PC-9 (cell line): ENCODE measurements at regions of chr12 and their contacts with region 1.

Region 1: GRCh38 chr12:113299619-113300237 is 35.2 kb downstream of the SLC8B1 start:
- DNase-seq: peak; percentile 87 to 96
- H3K4me3 ChIP-seq: no peak overlapping the region
- H3K27ac ChIP-seq: peak overlapping the region; percentile 62
- H3K4me1 ChIP-seq: peaks cover 19% of the 10 kb centered on the region
- H3K27me3 ChIP-seq: no peaks in the 10 kb centered on the region
- CTCF ChIP-seq: no peak

Region 2: GRCh38 chr12:112546996-112547395 is 752.7 kb before region 1 on chr12:
- CTCF ChIA-PET with region 1: no interaction called
- POLR2A ChIA-PET with region 1: no interaction called
- intact Hi-C with region 1: no loop called
- DNase-seq: no peak
- H3K4me3 ChIP-seq: no peak overlapping the region
- H3K27ac ChIP-seq: no peak overlapping the region
- H3K4me1 ChIP-seq: no peaks in the 10 kb centered on the region
- H3K27me3 ChIP-seq: peaks cover 59% of the 10 kb centered on the region
- CTCF ChIP-seq: no peak

Region 3: GRCh38 chr12:112762753-112763152 is 537.0 kb before region 1 on chr12:
- CTCF ChIA-PET with region 1: no interaction called
- POLR2A ChIA-PET with region 1: no interaction called
- intact Hi-C with region 1: no loop called
- DNase-seq: no peak
- H3K4me3 ChIP-seq: no peak overlapping the region
- H3K27ac ChIP-seq: no peak overlapping the region
- H3K4me1 ChIP-seq: peaks cover 10% of the 10 kb centered on the region; the same call in 1 of the 2 replicates
- H3K27me3 ChIP-seq: peaks cover 39% of the 10 kb centered on the region; the same call in 1 of the 2 replicates
- CTCF ChIP-seq: no peak

Region 4: DNA sequence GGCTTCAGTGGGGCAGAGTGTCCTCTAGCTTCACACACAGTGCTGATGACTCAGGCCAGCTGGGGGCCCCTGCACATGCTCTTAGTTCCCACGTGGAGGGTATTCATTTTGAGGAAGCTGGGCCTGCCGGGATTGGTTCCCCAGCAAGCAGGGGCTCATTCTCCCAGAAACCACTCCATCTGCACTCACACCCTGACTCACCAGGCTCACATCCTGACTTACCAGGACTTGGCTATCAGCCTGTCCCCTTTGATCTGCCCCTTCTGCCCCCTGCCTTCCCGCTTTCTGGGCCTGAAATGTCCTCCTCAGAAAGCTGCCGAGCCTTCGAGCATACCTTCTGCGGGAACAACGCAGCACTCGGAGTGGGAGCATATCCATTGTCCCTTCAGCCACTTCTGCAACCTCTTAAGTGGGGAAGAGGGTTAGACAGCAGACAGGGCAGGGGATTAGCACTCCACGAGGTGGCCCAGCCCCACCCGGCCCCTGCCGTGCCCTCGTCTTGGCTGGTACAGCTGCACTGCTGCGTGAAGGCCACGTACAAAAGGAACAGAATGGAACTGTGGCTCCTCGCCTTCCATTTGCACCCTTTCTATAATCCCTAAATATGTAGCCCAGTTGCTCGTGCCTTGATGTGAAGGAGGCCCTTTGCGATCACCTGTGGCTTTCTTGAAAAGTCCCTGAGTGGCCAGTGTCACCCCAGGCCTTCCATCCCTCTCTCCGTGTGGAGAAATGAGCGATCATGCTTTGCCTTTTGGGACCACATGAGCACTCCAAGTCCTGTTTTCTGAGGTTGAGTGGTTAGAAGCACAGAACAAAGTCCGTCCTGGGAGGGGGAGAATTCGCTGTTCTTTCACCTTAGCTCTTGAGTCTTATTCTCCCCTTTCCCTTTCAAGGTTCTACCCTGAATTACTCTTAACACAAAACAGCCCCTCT is 52.3 kb before region 1 on chr12:
- CTCF ChIA-PET with region 1: no interaction called
- POLR2A ChIA-PET with region 1: no interaction called
- intact Hi-C with region 1: loop called (anchors 1 kb)
- DNase-seq: peak in 1 of 2 experiments; percentile 38
- H3K4me3 ChIP-seq: no peak overlapping the region
- H3K27ac ChIP-seq: peak overlapping the region; percentile 83
- H3K4me1 ChIP-seq: peaks cover 50% of the 10 kb centered on the region
- H3K27me3 ChIP-seq: no peaks in the 10 kb centered on the region
- CTCF ChIP-seq: no peak

Region 5: GRCh38 chr12:113392988-113393579 is 93.4 kb after region 1 on chr12:
- CTCF ChIA-PET with region 1: no interaction called
- POLR2A ChIA-PET with region 1: no interaction called
- intact Hi-C with region 1: no loop called
- DNase-seq: no peak
- H3K4me3 ChIP-seq: no peak overlapping the region
- H3K27ac ChIP-seq: no peak overlapping the region
- H3K4me1 ChIP-seq: no peaks in the 10 kb centered on the region
- H3K27me3 ChIP-seq: no peaks in the 10 kb centered on the region
- CTCF ChIP-seq: no peak